ENCODE measurements at regions of chr22 and their contacts with region 1.

Region 1: DNA sequence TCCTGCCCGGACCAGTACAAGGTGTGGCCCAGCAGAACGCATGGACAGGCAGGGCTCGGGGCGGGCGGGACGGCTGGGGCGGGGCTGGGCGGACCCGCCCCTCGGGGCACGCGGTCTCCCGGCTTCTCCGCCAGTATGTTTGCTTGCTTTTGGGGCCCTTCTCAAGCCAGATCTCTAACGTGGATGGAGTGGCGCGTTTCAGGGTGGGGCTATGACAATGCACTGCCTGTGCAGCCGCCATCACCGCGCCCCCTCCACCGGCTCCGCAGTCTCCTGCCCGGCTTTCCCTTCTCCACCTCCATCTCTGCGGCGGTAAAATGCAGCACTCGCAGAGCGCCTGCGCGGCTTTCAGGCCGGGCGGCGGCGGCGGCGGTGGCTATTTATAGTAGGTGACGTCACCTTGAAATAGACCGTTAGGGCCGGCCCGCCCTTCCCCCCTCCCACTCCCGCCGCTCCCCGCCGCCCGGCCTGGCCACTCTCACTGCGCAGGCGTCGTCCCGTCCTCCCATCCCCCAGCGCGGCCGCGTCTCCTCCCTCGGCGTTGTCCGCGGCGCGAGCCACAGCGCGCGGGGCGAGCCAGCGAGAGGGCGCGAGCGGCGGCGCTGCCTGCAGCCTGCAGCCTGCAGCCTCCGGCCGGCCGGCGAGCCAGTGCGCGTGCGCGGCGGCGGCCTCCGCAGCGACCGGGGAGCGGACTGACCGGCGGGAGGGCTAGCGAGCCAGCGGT is at the start of gene YWHAH:
- DNase-seq: peak; percentile 93
- H3K4me3 Mint-ChIP-seq: no peak within 1 kb of the TSS
- H3K27ac Mint-ChIP-seq: peak within 1 kb of the TSS; percentile 87
- H3K4me1 Mint-ChIP-seq: peaks cover 18% of the 10 kb centered on the region
- H3K27me3 Mint-ChIP-seq: no peaks in the 10 kb centered on the region
- total RNA-seq, gene YWHAH: 115 to 118 TPM

Region 2: GRCh38 chr22:31489604-31490495 is 454.3 kb before region 1 on chr22 and contains the start of gene EIF4ENIF1:
- CTCF ChIA-PET with region 1: no interaction called
- intact Hi-C with region 1: loop called (anchors 1 kb)
- DNase-seq: peak; percentile 88
- H3K4me3 Mint-ChIP-seq: peak within 1 kb of the TSS; percentile 83
- H3K27ac Mint-ChIP-seq: peak within 1 kb of the TSS; percentile 97
- H3K4me1 Mint-ChIP-seq: peaks cover 50% of the 10 kb centered on the region
- H3K27me3 Mint-ChIP-seq: no peaks in the 10 kb centered on the region
- total RNA-seq, gene EIF4ENIF1: 28.1 to 29.0 TPM

Region 3: DNA sequence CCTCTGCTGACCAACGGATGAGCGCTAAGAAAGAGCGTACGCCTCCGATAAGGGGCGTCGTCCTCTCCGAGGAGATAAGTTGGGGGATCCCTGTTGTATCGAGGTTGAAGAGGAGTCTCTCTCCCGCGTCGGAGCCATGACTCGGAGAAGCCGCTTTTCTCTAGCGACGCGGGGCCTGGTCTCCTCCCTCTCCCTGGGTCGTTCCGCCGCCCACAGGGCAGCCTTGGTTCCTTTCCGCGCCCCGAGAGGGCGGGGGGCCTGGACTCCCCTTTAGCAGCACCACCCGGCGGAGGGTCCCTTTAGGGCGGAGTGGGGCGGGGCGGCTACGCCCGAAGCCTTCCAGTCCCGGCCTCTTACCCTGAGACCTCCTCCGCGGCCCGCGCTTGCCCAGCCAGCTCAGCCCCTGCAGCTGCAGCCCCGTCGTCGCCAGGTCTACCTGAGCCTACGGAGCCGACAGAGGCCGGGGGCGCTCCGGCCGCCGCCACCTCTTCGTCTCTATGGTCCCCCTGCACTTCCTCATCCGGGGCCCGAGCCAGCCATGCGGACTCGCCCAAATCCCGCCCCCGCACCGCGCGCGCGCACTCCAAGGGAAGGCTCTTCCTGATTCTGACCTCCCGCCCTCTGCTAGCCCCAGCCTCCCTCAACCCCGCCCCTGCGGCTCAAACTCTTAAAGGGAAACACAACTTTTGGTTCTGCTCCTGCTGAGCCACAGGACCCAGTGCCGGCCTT is 194.3 kb before region 1 on chr22 and contains the start of gene PRR14L:
- CTCF ChIA-PET with region 1: no interaction called
- intact Hi-C with region 1: loop called (anchors 1 kb)
- DNase-seq: peak; percentile 99
- H3K4me3 Mint-ChIP-seq: peak within 1 kb of the TSS; percentile 87
- H3K27ac Mint-ChIP-seq: peak within 1 kb of the TSS; percentile 93
- H3K4me1 Mint-ChIP-seq: peaks cover 55% of the 10 kb centered on the region
- H3K27me3 Mint-ChIP-seq: no peaks in the 10 kb centered on the region
- total RNA-seq, gene PRR14L: 28.7 to 31.8 TPM

Region 4: GRCh38 chr22:31829505-31829904 is 114.6 kb before region 1 on chr22:
- CTCF ChIA-PET with region 1: no interaction called
- intact Hi-C with region 1: loop called (anchors 2 kb)
- DNase-seq: peak; percentile 77
- H3K4me3 Mint-ChIP-seq: no peak overlapping the region
- H3K27ac Mint-ChIP-seq: no peak overlapping the region
- H3K4me1 Mint-ChIP-seq: peaks cover 22% of the 10 kb centered on the region
- H3K27me3 Mint-ChIP-seq: no peaks in the 10 kb centered on the region

Measured in activated naive CD4-positive, alpha-beta T cell treated with anti-CD3 and anti-CD28 coated beads for 36 hours (primary cell).